Heart left ventricle (tissue), 16 donors: ENCODE measurements at regions of chr7 and their contacts with region 1.

Region 1: DNA sequence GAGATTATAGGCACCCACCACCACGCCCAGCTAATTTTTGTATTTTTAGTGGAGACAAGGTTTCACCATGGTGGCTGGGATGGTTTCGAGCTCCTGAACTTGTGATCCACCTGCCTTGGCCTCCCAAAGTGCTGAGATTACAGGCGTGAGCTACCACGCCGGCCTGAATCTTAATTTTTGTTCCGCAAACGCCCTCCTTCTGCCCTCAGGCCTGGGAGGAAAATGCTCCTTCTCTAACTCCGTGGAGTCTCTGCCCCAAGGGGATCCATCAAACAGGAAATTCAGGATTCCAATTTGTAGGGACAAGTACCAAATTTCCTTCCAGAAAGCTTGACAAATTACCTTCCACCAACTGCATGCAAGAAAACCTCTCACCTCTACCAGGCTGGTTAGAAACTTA is 43.2 kb downstream of the RBAK start:
- DNase-seq: no peak
- ATAC-seq: no peak
- H3K4me3 ChIP-seq: no peak overlapping the region
- H3K27ac ChIP-seq: no peak overlapping the region
- H3K4me1 ChIP-seq: peaks cover 0 to 5% (median 0%) of the 10 kb centered on the region in 12 donors
- H3K27me3 ChIP-seq: peaks cover 0 to 33% (median 6%) of the 10 kb centered on the region in 9 donors
- CTCF ChIP-seq: no peak
- POLR2A ChIP-seq: no peak

Region 2: DNA sequence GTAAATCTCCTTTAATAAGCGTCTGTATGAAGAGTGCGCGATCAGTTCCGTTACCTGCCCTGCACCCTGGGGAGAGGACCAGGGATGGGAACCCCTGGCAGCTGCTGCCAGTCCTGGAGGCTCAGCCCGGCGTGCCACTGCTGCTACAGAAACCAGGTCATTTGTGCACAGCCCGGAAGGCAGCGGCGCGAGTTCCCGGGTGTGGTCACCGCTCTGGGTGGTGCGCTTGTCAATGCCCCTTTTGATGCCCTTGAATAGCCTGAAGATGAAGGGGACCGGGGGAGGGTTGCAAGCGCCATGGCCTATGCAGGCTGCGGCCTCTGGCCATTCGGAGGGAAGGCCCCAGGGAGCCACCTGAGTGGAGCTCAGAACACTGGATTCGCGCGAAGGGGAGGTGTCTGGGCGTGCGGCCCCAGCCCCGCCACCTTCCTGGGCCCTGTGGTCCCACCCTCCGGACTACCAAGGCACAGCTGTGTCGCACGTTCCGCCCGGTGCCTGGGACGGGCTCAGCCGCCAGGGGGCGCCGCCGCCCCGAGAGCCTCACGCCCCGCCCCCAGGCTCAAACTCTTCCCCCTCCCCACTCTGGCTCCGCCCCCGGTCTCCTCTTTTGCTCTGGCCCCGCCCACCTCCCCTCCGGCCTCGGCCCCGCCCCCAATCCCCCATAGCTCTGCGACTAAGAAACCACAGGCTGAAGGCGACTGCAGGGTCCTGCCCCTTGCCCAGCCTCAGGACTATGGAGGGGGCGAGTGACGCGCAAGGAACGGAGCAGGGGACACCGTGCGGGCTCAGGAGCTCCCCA is 297.0 kb before region 1 on chr7:
- intact Hi-C with region 1: loop called in 5 of 10 experiments (anchors 2 to 10 kb)
- DNase-seq: peak; percentile 62 to 85 (median 83)
- ATAC-seq: peak; percentile 29 to 74 (median 66)
- H3K4me3 ChIP-seq: peak overlapping the region in 11 of 12 donors; percentile 11 to 62 (median 51)
- H3K27ac ChIP-seq: peak overlapping the region in 6 of 12 donors; percentile 25 to 76 (median 47)
- H3K4me1 ChIP-seq: peaks cover 0 to 10% (median 5%) of the 10 kb centered on the region in 12 donors
- H3K27me3 ChIP-seq: no peaks in the 10 kb centered on the region
- CTCF ChIP-seq: peak; percentile 63 to 96 (median 82)
- POLR2A ChIP-seq: no peak

Region 3: GRCh38 chr7:4797858-4798705 is 290.8 kb before region 1 on chr7:
- intact Hi-C with region 1: loop called in 7 of 10 experiments (anchors 2 to 10 kb)
- DNase-seq: peak in 3 of 5 donors; percentile 41 to 77 (median 56)
- ATAC-seq: peak in 3 of 4 donors; percentile 68 to 73 (median 69)
- H3K4me3 ChIP-seq: no peak overlapping the region
- H3K27ac ChIP-seq: peak overlapping the region in 6 of 12 donors; percentile 20 to 70 (median 46)
- H3K4me1 ChIP-seq: peaks cover 0 to 26% (median 9%) of the 10 kb centered on the region in 12 donors
- H3K27me3 ChIP-seq: no peaks in the 10 kb centered on the region
- CTCF ChIP-seq: peak; percentile 82 to 96 (median 88)
- POLR2A ChIP-seq: no peak

Region 4: DNA sequence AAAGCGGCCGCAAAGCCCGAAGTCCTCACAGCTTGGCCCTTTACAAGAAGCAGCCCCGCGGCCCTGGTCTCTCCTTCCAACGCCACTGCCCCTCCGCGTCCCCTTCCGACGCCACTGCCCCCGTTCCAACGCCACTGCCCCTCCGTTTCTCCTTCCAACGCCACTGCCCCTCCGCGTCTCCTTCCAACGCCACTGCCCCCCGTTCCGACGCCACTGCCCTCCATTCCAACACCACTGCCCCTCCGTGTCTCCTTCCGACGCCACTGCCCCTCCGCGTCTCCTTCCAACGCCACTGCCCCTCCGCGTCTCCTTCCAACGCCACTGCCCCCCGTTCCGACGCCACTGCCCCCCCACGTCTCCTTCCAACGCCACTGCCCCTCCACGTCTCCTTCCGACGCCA is 280.3 kb before region 1 on chr7:
- intact Hi-C with region 1: no loop called
- DNase-seq: no peak
- ATAC-seq: no peak
- H3K4me3 ChIP-seq: peak overlapping the region in 1 of 12 donors; percentile 29
- H3K27ac ChIP-seq: peak overlapping the region in 4 of 12 donors; percentile 3 to 76 (median 40)
- H3K4me1 ChIP-seq: peaks cover 0 to 4% (median 0%) of the 10 kb centered on the region in 12 donors
- H3K27me3 ChIP-seq: peaks cover 0 to 12% (median 0%) of the 10 kb centered on the region in 9 donors
- CTCF ChIP-seq: no peak
- POLR2A ChIP-seq: no peak

Region 5: GRCh38 chr7:4973728-4974198 is 115.1 kb before region 1 on chr7:
- intact Hi-C with region 1: loop called in 7 of 10 experiments (anchors 2 to 10 kb)
- DNase-seq: peak; percentile 88 to 96 (median 91)
- ATAC-seq: peak; percentile 99
- H3K4me3 ChIP-seq: peak overlapping the region; percentile 70 to 94 (median 88)
- H3K27ac ChIP-seq: peak overlapping the region; percentile 35 to 94 (median 86)
- H3K4me1 ChIP-seq: peaks cover 0 to 27% (median 9%) of the 10 kb centered on the region in 12 donors
- H3K27me3 ChIP-seq: no peaks in the 10 kb centered on the region
- CTCF ChIP-seq: peak; percentile 71 to 91 (median 80)
- POLR2A ChIP-seq: peak in 1 of 2 donors; percentile 33